ENCODE measurements at regions of chr7 and their contacts with region 1.

Region 1: DNA sequence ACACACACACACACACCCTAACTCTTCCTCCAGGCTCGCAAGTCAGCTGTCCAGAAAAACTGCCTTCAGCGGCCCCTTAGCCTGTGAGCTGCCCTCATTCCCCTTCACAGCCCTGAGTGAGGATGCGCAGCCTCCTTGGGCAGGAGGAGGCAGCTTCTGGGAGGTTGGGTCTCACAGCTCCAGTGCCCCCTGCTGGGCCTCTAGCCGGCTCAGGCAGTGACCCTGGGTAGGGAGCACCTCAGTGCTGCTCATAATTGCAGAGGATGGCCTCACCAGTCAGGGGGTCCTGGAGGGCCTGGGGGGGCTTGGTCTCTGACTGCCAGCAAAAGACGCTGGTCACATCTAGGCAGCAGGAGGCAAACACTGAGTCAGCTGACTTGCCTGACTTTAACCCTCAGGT is 43.7 kb downstream of the ZNF273 start:
- DNase-seq: peak in 2 of 6 donors; percentile 56 to 62
- ATAC-seq: peak; percentile 36 to 71 (median 50)
- H3K4me3 ChIP-seq: peak overlapping the region in 1 of 4 donors; percentile 54
- H3K27ac ChIP-seq: no peak overlapping the region
- H3K4me1 ChIP-seq: peaks cover 0 to 2% (median 0%) of the 10 kb centered on the region in 3 donors
- H3K27me3 ChIP-seq: no peaks in the 10 kb centered on the region
- CTCF ChIP-seq: no peak

Region 2: DNA sequence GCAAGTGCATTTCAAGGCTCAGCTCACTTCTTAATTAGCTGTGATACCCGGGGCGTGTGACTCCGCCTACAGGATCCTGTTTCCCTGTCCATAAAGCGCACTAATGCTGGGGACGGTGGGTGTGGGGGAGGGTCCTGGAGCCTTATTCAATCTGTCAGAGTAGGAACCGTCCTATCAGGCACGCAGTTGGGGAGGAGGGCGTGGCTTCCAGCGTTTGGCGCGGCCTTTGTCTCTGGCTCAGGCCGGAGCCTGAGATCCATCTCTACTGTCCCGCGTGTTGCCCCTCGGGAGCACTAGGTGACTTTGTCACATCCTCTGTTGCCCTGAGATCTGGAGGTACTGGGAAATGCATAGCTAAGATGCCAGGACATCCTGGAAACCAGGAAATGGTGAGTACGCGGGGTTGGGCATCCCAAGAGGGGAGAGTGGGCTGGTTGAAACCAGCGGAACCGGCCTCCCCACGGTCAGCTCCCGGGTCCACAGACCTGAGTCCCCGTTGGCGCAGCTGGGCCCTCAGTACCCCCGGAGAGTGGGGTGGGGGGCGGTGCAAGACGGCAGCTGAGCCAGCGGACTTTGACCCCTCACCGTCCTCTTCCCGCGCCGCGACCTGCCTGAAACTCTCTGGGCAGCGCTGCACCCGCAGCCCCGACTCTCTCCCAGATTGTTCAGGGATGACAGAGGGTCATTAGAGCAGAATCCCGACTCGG is 322.5 kb after region 1 on chr7:
- intact Hi-C with region 1: no loop called
- DNase-seq: peak in 3 of 6 donors; percentile 7 to 24 (median 23)
- ATAC-seq: peak in 3 of 4 donors; percentile 57 to 89 (median 70)
- H3K4me3 ChIP-seq: peak overlapping the region in 3 of 4 donors; percentile 5 to 35 (median 16)
- H3K27ac ChIP-seq: no peak overlapping the region
- H3K4me1 ChIP-seq: peaks cover 0 to 4% (median 0%) of the 10 kb centered on the region in 3 donors
- H3K27me3 ChIP-seq: peaks cover 4 to 30% (median 7%) of the 10 kb centered on the region in 4 donors
- CTCF ChIP-seq: no peak

Region 3: GRCh38 chr7:65307651-65308299 is 361.0 kb after region 1 on chr7:
- intact Hi-C with region 1: loop called in 1 of 3 experiments (anchors 10 kb)
- DNase-seq: peak in 3 of 6 donors; percentile 11 to 50 (median 24)
- ATAC-seq: peak; percentile 50 to 91 (median 82)
- H3K4me3 ChIP-seq: no peak overlapping the region
- H3K27ac ChIP-seq: no peak overlapping the region
- H3K4me1 ChIP-seq: peaks cover 0 to 4% (median 0%) of the 10 kb centered on the region in 3 donors
- H3K27me3 ChIP-seq: no peaks in the 10 kb centered on the region
- CTCF ChIP-seq: peak; percentile 54 to 84 (median 72)